Posterior vena cava (tissue), 2 donors: ENCODE measurements at regions of chr19 and their contacts with region 1.

Region 1: DNA sequence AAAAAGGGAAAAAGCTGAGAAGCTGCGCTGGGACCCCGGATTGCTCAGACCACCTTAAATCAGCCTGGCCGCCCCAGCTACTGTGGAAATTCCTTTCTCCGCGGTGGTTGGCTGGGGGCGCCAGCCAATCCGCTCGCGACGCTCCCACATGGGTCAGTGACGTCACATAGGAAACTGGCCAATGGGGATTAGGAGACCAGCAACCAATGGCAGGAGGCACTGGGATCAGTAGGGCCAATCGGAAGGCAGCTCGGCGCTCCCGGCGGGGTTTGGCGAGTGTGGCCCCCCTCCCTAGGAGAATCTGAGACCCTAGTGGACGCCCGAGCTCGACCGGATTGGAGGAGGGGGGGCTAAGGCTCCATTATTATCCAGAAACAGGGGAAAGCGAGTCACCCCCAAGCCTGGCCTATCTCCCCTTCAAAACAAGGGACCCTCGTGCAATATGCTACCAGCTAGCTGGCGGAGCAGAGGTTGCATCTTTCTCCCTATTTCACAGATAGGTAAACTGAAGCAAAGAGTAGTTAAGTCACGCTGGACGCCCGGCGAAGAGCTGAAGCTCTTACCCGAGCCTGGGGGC is 6.5 kb upstream of the TLE2 start:
- DNase-seq: peak; percentile 98

Region 2: DNA sequence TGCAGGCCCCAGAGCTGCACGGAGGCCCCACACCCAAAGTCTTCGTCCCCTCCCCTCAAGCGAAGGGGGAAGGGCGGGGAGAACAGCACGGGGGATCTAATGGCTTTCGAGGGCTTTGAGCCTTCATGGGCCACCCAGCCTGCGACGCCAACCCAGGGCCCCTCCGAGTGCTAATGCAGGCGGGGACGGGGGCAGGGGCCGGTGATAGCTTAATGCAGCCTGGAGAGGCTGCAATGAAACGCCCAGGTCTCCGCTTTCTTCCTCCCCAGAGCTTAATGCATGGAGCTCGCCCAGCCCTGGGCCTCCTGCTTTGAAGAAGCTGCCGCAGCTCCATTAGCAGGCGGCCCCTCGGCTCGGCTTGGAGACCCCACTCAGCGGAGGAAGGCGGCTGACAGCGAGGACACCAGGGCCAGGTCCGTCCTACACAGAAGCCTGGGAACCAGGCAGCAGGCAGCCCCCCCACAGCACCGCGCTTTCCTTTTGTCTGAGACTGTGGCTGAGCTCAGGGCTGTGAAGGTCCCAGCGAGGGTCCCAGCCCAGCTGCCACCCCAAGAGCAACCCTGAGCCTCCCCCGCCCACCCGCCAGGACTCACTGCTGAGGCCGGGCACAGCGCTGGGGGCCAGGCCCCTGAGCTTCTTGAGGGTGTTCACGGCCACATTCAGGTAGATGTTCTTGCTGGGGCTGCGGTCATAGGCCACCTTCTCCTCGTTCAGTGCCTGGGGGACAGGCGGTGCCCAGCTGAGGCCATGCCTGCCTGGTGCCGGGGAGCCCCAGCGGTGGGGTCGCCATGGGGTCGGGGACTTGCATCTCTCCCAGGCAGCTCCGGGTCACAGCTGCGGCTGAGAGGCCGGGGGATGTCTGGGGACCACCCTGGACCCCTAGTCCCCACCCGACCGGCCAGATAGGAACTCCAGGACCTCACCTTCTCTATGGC is 1216.0 kb before region 1 on chr19:
- intact Hi-C with region 1: loop called in 1 of 2 experiments (anchors 5 kb)
- DNase-seq: no peak

Region 3: DNA sequence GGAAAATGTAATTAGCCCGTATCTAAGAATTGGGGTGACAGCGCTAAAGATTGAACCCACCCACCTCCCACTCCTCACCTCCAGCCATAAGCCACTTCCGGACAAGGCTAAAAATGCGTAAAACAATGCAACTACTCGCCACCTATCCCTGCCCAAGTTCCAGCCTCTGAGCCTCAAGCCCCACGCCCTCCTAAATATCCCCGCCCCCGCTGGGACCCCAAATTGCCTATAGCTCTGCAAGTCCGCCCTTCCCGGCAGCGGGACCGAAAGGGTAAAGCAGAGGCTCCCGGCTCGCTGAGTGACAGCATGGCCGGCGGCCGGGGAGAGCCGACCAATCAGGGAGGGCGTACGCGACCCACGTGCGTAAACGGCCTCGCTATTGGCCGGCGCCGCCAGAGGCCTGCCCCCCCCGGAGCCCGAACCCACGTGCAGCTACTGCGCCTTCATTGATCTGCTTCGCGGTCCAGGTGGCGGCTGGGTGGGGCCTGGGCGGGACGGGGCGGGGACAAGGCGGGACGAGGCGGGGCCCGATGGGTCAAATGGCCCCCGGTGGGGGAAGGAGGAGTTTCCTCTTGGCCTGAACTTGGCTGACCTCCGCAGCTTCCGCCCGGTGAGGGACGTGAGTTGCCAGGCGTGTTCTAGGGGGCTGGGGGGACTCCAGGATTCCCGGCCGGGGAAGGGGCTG is 58.5 kb before region 1 on chr19 and contains the start of gene TLE6:
- intact Hi-C with region 1: loop called in 1 of 2 experiments (anchors 5 kb)
- DNase-seq: peak; percentile 99
- total RNA-seq, gene TLE6: 0.57 to 3.4 TPM

Region 4: DNA sequence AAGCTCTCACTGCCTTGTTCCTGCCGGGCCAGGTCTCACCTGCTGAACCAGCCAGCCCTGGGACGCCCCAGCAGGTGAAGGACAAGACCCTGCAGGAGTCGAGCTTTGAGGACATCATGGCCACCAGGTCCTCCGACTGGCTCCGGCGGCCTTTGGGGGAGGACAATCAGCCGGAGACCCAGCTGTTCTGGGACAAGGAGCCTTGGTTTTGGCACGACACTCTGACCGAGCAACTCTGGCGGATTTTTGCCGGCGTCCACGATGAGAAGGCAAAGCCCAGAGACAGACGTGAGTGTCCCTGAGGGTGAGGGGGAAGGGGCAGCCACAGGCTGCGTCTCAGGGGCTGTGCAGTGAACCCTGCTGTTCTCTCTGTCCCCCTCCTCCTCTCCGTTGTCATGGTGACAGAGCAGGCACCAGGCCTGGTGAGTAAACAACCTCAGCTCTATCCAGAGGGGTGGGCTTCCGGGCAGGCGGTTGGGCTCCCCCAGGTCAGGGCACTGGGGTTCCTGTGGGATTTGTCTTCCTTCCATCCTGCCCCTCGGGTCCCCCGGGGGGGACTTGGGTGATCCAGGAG is 48.6 kb before region 1 on chr19:
- intact Hi-C with region 1: loop called in 1 of 2 experiments (anchors 5 kb)
- DNase-seq: no peak

Region 5: GRCh38 chr19:3006075-3006767 is 29.4 kb before region 1 on chr19:
- intact Hi-C with region 1: no loop called
- DNase-seq: no peak

Region 6: DNA sequence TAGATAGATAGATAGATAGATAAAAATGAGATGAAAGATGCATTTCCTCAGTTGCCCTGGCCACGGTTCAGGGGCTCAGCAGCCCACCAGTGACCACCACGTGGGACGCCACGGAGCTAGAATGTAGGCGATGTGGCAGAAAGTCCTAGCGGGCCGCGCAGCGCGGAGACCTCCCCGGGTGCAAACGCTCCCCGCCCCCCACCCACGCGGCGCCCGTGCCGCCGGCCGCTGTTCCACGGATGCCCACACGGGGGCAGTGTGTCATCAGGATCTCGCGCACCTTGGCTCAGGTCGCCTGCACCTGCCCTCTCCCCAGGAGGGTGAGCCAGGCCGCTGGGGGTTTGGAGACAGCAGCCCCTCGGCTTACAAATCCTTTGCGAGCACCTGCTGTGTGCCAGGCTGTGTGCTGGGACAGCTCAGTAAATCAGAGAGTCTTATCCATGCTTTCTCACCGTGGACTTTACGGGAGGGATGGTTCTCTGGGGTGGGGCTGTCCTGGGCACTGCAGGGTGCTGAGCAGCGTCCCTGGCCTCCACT is 40.3 kb after region 1 on chr19:
- intact Hi-C with region 1: no loop called
- DNase-seq: peak; percentile 85